PC-9 (cell line): ENCODE measurements at regions of chr14 and their contacts with region 1.

Region 1: DNA sequence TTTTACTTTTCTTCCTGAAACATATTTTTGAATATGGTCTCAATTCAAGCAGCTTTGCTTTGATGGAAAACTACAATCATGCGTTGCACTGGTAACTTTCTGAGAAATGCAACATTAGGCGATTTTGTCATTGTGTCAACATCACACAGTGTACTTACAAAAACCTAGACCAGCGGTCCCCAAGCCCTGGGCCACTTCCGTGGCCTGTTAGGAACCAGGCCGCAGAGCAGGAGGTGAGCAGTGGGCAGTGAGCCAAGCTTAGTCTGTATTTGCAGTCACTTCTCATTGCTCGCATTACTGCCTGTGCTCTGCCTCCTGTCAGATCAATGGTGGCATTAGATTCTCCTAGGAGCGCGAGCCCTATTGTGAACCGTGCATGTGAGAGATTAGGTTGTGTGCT is 163.7 kb upstream of the NOVA1 start:
- DNase-seq: no peak
- H3K4me3 ChIP-seq: no peak overlapping the region
- H3K27ac ChIP-seq: no peak overlapping the region
- H3K4me1 ChIP-seq: peaks cover 15% of the 10 kb centered on the region
- H3K27me3 ChIP-seq: no peaks in the 10 kb centered on the region
- CTCF ChIP-seq: no peak

Region 2: DNA sequence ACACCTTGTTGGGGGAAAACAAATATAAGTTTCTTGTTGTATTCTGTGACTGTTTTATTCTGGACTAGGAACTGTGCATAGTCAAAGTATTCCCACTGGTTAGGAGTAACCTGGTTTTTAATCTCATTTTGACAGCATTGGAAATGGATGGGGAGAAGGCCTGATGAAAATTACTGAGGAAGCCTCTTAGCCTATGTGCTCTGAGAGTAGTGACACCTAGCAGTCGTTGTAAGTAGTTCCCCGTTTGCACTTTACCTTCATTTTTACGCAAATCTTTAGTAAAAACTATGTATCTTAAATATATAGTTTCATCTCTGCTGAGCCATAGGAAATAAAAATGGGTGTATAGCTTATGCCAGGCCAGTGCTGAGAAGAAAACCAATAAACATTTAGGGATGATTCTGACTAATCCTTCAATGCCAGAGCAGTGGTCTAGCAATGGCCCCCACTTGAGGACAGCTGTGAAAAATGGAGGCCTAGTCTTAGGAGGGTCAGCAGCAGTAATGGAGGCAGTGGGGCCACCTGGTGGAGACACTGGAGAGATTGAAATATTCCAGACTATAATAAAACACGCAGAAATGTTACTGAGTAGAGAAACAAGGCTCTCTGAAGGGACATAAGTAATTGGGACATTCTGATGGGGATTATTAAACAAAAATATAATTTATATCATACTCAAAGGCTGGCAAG is 30.5 kb before region 1 on chr14:
- CTCF ChIA-PET with region 1: no interaction called
- POLR2A ChIA-PET with region 1: no interaction called
- intact Hi-C with region 1: no loop called
- DNase-seq: peak in 1 of 2 experiments; percentile 1
- H3K4me3 ChIP-seq: no peak overlapping the region
- H3K27ac ChIP-seq: no peak overlapping the region
- H3K4me1 ChIP-seq: no peaks in the 10 kb centered on the region
- H3K27me3 ChIP-seq: no peaks in the 10 kb centered on the region
- CTCF ChIP-seq: no peak; the same call in 1 of the 2 replicates

Region 3: DNA sequence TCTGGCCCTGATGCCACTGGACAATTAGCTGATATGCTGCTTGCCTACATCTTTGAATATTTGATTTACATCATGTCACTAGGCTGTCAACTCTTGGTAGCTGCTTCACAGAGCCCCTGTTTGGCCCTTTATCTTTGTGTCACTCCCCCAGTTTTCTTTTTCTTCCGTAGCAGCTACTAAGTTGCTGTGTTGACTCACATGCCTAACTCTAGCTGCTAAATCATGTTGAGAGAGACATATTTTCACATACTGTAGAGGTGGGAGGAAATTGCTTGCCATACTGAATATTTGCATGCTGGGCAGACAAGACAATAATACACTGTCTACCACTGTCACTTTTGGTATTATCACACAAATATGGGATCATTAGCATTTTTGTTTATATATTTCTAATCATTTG is 16.6 kb before region 1 on chr14:
- CTCF ChIA-PET with region 1: no interaction called
- POLR2A ChIA-PET with region 1: no interaction called
- intact Hi-C with region 1: loop called (anchors 1 kb)
- DNase-seq: no peak
- H3K4me3 ChIP-seq: no peak overlapping the region
- H3K27ac ChIP-seq: no peak overlapping the region
- H3K4me1 ChIP-seq: no peaks in the 10 kb centered on the region
- H3K27me3 ChIP-seq: no peaks in the 10 kb centered on the region
- CTCF ChIP-seq: no peak

Region 4: DNA sequence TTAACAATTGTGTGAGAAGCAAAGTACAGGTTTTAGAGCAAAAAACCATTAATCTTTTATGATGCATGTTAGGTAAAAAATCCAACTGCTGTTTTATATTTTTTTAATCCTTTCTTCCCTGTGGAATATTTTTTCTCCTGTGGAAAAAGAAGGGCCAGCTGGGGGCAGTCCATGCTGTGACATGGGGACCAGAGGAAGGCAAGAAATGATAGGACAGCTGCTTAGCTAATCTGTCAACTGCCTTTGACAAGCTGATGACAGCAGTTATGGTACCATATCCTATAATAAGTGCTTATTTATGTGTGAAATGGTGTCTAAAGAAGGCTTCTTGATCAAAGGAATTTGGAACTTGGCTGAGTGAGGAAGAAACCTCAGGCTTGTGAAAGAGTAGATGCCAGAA is 288.7 kb after region 1 on chr14:
- CTCF ChIA-PET with region 1: no interaction called
- POLR2A ChIA-PET with region 1: no interaction called
- intact Hi-C with region 1: no loop called
- DNase-seq: no peak
- H3K4me3 ChIP-seq: no peak overlapping the region
- H3K27ac ChIP-seq: no peak overlapping the region
- H3K4me1 ChIP-seq: no peaks in the 10 kb centered on the region
- H3K27me3 ChIP-seq: no peaks in the 10 kb centered on the region
- CTCF ChIP-seq: no peak